GM10248 (cell line): ENCODE measurements at regions of chr9 and their contacts with region 1.

Region 1: DNA sequence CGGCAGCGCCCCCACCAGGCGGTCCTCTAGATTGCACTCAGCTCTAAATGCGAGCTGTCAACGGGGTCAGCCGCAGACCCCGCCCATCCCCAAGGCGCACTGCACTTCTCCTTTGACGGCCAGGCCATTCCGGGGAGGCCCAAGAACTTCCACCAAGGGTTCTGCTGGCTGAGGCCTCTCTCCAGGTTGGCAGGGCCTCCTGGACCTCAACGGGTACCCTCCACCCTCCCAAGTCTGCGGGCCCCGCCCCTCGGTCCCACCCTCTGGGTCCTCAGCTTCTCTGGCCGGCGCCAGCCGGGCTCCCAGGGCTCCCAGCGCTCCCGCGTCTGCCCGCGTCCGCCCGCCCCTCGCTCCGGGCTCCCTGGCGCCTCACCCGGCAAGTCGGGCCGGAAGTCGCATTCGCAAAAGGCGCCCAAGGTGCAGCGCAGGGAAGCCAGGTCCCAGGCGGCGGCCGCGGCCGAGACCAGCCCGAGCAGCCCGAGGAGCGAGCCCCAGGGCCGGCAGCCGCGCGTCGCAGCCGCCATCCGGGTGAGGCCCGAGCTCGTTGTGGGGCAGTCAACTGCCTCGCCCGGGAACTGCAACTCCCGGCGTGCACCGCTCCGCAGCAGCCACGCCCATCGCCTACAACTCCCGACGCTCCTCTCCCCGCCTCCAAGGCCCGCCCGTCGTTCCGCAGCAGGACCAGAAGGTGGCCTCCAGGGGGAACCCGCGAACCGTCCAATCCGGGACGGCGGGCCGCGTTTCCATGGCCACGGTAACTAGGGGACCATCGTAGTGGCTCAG is at the start of gene TOR2A:
- DNase-seq: peak; percentile 99
- CTCF ChIP-seq: peak; percentile 99

Region 2: GRCh38 chr9:127586537-127586936 is 148.4 kb before region 1 on chr9:
- CTCF ChIA-PET with region 1: interaction called, 25 read pairs
- POLR2A ChIA-PET with region 1: no interaction called
- DNase-seq: peak; percentile 78
- CTCF ChIP-seq: peak; percentile 90

Region 3: GRCh38 chr9:127715394-127716337 is 19.3 kb before region 1 on chr9 and contains the starts of genes PTRH1 and TTC16:
- CTCF ChIA-PET with region 1: interaction called, 53 read pairs
- POLR2A ChIA-PET with region 1: interaction called, 4 read pairs
- DNase-seq: peak; percentile 99
- CTCF ChIP-seq: no peak

Region 4: DNA sequence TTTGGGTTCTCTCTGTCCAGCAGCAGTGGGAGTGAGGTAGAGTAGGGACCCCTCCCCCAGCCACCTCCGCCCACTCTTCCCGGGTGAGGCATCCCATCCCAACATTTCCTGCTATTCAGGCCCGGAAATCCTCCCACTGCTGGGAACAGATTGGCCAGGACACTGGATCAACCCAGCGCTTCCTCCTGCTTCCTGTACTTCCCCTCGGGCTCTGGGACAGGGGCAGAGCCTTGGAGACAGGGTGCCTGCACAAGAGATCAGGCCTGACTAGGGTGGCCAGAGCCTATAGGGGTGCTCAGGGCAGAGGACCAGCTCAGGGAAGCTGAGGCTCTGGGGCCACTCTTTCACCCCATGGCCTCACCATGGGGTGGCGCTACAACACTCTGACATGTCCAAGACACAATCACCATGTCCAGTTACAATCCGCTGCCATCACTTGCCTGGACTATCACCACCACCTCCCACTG is 29.0 kb after region 1 on chr9:
- CTCF ChIA-PET with region 1: interaction called, 16 read pairs
- POLR2A ChIA-PET with region 1: interaction called, 3 read pairs
- DNase-seq: peak; percentile 45
- CTCF ChIP-seq: peak; percentile 62

Region 5: DNA sequence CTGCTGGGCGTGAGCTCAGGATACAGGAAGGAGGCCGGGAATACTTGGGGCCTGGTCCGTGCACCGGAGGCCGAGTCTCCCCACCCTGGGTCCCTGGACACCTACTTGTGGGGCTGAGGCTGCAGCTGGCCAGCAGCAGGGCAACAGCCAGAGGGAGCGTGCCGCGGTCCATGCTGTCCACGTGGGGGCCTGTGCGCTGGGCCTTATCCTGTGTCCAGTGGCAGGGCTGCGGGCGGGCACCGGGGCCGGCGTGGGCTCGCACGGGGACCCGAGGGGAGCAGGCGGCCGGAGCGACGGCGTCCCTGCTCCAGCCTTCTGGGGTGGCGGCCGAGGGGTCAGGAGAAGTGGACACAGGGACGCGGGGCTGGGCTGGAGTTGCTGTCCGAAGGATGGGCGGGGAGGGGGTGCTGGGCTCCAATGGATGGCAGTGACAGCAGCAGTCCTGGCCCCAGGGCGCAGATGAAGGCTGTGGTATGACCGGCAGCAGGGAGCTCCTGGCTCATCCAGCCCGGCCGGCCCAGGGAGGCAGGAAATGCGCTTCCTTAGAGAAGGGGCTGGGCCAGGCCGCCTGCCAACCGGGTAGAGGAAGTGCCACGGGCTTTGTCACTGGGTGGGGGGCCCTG is 119.4 kb after region 1 on chr9 and contains the start of gene ENG:
- CTCF ChIA-PET with region 1: interaction called, 13 read pairs
- POLR2A ChIA-PET with region 1: no interaction called
- DNase-seq: no peak
- CTCF ChIP-seq: peak; percentile 11

Region 6: GRCh38 chr9:127916665-127917613 is 182.0 kb after region 1 on chr9 and contains the start of gene ST6GALNAC4:
- CTCF ChIA-PET with region 1: interaction called, 52 read pairs
- POLR2A ChIA-PET with region 1: interaction called, 5 read pairs
- DNase-seq: peak; percentile 99
- CTCF ChIP-seq: no peak